HepG2 (cell line): ENCODE measurements at regions of chrX and their contacts with region 1.

Region 1: GRCh38 chrX:10900585-10901289 is 210.4 kb upstream of the HCCS start:
- DNase-seq: peak; percentile 82
- ATAC-seq: peak; percentile 81
- H3K4me3 ChIP-seq: no peak overlapping the region
- H3K27ac ChIP-seq: peak overlapping the region; percentile 49
- H3K4me1 ChIP-seq: peaks cover 29% of the 10 kb centered on the region
- H3K27me3 ChIP-seq: no peaks in the 10 kb centered on the region
- CTCF ChIP-seq: no peak
- EP300 ChIP-seq: no peak
- POLR2A ChIP-seq: no peak
- RAD21 ChIP-seq: no peak

Region 2: GRCh38 chrX:10859353-10859752 is 41.4 kb before region 1 on chrX:
- CTCF ChIA-PET with region 1: no interaction called
- POLR2A ChIA-PET with region 1: no interaction called
- in situ Hi-C with region 1: no loop called
- intact Hi-C with region 1: no loop called
- DNase-seq: no peak
- ATAC-seq: no peak
- H3K4me3 ChIP-seq: no peak overlapping the region
- H3K27ac ChIP-seq: no peak overlapping the region
- H3K4me1 ChIP-seq: 0 out of 2 replicates have a peak, but pooled peaks cover 5% of the 10 kb centered on the region
- H3K27me3 ChIP-seq: no peaks in the 10 kb centered on the region
- CTCF ChIP-seq: no peak
- EP300 ChIP-seq: no peak
- POLR2A ChIP-seq: no peak
- RAD21 ChIP-seq: no peak

Region 3: DNA sequence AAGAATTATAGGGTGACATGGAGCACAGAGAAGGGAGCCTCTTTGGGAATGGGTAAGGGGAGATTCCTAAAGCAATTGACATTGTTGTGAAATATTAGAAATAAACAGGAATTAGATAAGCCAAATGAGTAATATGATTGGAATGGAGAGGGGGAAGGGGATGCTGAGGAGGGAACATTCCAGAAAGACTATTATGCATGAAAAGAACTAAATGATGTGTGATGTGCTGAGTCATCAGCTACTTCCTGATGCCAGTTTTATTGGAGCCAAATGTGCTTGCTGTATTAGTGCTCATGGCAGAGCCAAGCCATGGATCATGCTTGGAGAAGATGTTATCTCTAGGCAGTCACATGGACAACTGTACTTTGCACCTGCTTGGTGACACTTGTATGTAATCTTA is 21.4 kb after region 1 on chrX:
- CTCF ChIA-PET with region 1: no interaction called
- POLR2A ChIA-PET with region 1: no interaction called
- in situ Hi-C with region 1: no loop called
- intact Hi-C with region 1: loop called (anchors 1 kb)
- DNase-seq: peak; percentile 1
- ATAC-seq: no peak
- H3K4me3 ChIP-seq: no peak overlapping the region
- H3K27ac ChIP-seq: no peak overlapping the region
- H3K4me1 ChIP-seq: 0 out of 2 replicates have a peak, but pooled peaks cover 6% of the 10 kb centered on the region
- H3K27me3 ChIP-seq: no peaks in the 10 kb centered on the region
- CTCF ChIP-seq: no peak
- EP300 ChIP-seq: no peak
- POLR2A ChIP-seq: no peak
- RAD21 ChIP-seq: no peak

Region 4: DNA sequence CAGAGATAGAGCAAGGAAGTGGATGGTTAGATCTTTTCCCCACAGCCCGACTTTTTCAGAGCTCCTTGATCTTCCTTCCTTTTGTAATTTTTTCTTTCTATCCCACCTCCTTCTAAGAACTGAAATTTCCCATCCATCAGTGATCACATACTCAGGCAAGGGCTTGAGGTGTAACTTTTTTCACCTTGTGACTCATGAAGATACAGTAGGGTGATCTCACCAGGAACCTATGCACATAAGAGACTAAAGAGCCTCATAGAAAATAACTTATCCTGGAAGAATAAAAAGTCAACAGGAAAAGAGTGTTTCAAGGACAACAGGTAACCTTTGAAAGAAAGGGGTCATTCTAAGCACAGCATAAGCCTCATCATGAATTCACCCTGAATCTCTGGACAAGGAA is 79.2 kb after region 1 on chrX:
- CTCF ChIA-PET with region 1: no interaction called
- POLR2A ChIA-PET with region 1: interaction called, 3 read pairs
- in situ Hi-C with region 1: no loop called
- intact Hi-C with region 1: loop called (anchors 5 kb)
- DNase-seq: no peak
- ATAC-seq: no peak
- H3K4me3 ChIP-seq: no peak overlapping the region
- H3K27ac ChIP-seq: no peak overlapping the region
- H3K4me1 ChIP-seq: peaks cover 35% of the 10 kb centered on the region
- H3K27me3 ChIP-seq: no peaks in the 10 kb centered on the region
- CTCF ChIP-seq: no peak
- EP300 ChIP-seq: no peak
- POLR2A ChIP-seq: no peak
- RAD21 ChIP-seq: no peak

Region 5: DNA sequence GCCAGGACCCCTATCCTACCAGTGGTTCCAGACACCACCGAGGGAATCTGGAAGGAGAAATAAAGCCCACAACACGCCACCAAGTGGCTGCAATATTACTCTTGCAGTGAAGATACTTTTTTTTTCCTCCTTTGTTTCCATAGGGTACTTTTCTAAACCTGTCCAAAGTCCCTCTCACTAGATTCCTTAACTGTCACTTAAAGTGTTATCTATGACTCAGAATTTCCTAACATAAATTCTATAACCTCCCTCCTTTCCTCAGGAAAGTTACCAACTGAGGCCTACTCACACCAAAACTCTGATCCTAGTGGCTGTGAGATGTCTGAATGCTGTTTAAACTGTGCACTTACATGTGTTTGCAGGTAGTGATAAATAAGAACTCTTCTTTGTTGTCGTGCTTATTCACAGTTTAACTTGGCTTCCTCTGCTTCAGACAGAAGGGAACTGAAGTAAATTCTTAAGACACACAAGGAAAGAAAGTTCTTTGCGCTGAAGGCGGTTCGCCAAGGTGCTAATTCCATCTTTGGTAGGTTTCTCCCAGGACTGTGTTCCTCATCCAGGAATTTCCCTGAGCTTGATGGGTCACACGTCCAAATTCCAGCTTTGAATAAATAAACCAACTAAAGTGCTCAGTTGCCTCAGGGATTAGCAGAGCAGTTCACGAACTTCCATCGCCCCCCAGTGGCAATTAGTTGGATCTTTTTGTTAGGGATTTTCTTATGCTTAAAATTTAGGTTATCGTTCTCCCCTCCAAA is 199.7 kb after region 1 on chrX:
- CTCF ChIA-PET with region 1: no interaction called
- POLR2A ChIA-PET with region 1: no interaction called
- in situ Hi-C with region 1: no loop called
- intact Hi-C with region 1: loop called (anchors 10 kb)
- DNase-seq: peak; percentile 76
- ATAC-seq: peak; percentile 90
- H3K4me3 ChIP-seq: no peak overlapping the region; a peak in 1 of 6 replicates
- H3K27ac ChIP-seq: peak overlapping the region; percentile 81
- H3K4me1 ChIP-seq: peaks cover 50% of the 10 kb centered on the region
- H3K27me3 ChIP-seq: no peaks in the 10 kb centered on the region
- CTCF ChIP-seq: peak; percentile 71
- EP300 ChIP-seq: 0 out of 4 replicates have a peak, but pooled peaks of 1 of the 2 experiments have one; percentile 6
- POLR2A ChIP-seq: no peak
- RAD21 ChIP-seq: peak; percentile 52; the same call in 1 of the 2 replicates